ENCODE measurements at regions of chr19 and their contacts with region 1.

Region 1: DNA sequence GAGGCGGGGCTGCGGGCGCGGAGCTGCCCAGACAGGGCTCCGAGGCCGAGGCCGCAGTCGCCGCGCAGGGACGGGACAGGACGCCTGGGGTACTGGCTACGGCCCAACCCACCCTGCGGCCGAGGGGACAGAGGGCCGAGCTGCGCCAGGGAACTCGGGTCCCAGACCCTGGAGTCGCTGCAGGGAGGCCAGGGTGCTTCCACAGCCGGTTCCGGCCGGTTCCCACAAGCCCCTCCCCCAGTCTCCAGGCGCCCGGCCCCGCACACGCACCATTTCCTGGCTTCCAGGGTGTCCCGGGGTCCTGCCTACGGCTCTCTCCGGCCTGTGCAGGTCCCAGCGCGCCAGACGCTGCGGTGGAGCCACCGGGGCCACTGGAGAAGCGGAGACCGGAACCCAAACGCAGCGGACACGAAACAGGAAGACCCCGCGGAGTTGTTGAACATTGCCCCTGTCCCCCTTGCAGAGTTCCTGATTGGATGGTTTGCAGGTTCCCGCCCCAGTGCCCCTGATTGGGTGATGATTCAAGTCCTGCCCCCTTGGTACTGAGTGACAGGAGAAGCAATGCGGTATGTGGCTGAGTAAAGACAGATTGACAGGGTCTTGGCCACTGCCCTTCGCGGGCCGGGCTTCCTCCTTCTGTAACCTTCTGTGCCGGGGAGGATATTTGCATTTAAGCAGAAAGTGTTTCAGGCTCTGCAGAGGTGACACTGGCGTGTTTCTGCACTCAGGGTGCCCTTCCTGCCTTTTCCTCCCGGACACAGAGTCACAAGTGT is at the start of gene ZNF564:
- DNase-seq: peak; percentile 93 to 98 (median 97)
- ATAC-seq: peak; percentile 98
- H3K4me3 ChIP-seq: peak within 1 kb of the TSS; percentile 54 to 98 (median 82)
- H3K27ac ChIP-seq: peak within 1 kb of the TSS; percentile 91 to 100 (median 97)
- H3K4me1 ChIP-seq: peaks cover 0 to 52% (median 29%) of the 10 kb centered on the region in 12 donors
- H3K27me3 ChIP-seq: peaks cover 0 to 5% (median 0%) of the 10 kb centered on the region in 9 donors
- CTCF ChIP-seq: no peak
- POLR2A ChIP-seq: peak in 1 of 2 donors; percentile 91
- total RNA-seq, gene ZNF564: 6.1 to 10.4 (median 8.0) TPM

Region 2: GRCh38 chr19:12440541-12441316 is 110.5 kb before region 1 on chr19 and contains the start of gene ZNF443:
- intact Hi-C with region 1: loop called in 1 of 10 experiments (anchors 1 kb)
- DNase-seq: peak; percentile 98 to 99 (median 99)
- ATAC-seq: peak; percentile 100
- H3K4me3 ChIP-seq: peak within 1 kb of the TSS; percentile 58 to 87 (median 76)
- H3K27ac ChIP-seq: peak within 1 kb of the TSS; percentile 40 to 87 (median 76)
- H3K4me1 ChIP-seq: peaks cover 0 to 12% (median 0%) of the 10 kb centered on the region in 12 donors
- H3K27me3 ChIP-seq: no peaks in the 10 kb centered on the region
- CTCF ChIP-seq: peak in 2 of 12 donors; percentile 12 to 21
- POLR2A ChIP-seq: peak in 1 of 2 donors; percentile 59
- total RNA-seq, gene ZNF443: 1.5 to 3.6 (median 2.1) TPM

Region 3: DNA sequence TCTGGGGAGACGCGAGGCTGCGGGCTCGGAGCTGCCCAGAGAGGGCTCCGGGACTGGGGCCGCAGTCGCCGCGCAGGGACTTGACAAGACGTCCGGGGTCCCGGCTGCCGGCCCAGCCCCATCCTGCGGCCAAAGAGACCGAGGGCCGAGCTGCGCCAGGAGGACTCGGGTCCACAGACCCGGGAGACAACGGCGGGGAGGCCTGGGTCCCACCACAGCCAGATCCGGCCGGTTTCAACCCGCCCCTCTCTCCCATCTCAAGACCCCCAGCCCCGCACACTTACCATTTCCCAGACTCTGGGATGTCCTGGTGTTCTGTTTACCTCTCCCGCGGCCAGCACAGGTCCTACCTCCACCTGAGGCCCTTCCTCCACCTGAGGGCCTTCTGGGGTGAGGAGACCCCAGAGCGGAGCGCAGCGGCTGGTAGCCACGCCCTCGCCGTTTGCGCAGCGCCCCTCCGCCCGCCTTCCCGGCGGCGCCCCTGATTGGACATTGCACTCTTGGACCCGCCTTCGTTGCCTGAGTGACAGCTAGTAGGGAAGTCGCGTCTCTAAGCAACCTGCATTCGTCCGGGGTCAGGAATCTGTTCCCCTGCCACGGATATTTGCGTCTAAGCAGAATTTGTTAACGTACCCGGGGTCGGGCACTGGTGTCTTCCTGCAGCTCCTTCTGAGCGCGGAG is 66.7 kb before region 1 on chr19 and contains the start of gene ZNF709:
- intact Hi-C with region 1: loop called in 1 of 10 experiments (anchors 1 kb)
- DNase-seq: peak; percentile 91 to 95 (median 93)
- ATAC-seq: peak; percentile 98 to 100 (median 100)
- H3K4me3 ChIP-seq: peak within 1 kb of the TSS; percentile 80 to 99 (median 94)
- H3K27ac ChIP-seq: peak within 1 kb of the TSS; percentile 39 to 87 (median 76)
- H3K4me1 ChIP-seq: peaks cover 0 to 27% (median 13%) of the 10 kb centered on the region in 12 donors
- H3K27me3 ChIP-seq: no peaks in the 10 kb centered on the region
- CTCF ChIP-seq: no peak
- POLR2A ChIP-seq: peak in 1 of 2 donors; percentile 51
- total RNA-seq, gene ZNF709: 0.89 to 2.9 (median 1.7) TPM

Region 4: DNA sequence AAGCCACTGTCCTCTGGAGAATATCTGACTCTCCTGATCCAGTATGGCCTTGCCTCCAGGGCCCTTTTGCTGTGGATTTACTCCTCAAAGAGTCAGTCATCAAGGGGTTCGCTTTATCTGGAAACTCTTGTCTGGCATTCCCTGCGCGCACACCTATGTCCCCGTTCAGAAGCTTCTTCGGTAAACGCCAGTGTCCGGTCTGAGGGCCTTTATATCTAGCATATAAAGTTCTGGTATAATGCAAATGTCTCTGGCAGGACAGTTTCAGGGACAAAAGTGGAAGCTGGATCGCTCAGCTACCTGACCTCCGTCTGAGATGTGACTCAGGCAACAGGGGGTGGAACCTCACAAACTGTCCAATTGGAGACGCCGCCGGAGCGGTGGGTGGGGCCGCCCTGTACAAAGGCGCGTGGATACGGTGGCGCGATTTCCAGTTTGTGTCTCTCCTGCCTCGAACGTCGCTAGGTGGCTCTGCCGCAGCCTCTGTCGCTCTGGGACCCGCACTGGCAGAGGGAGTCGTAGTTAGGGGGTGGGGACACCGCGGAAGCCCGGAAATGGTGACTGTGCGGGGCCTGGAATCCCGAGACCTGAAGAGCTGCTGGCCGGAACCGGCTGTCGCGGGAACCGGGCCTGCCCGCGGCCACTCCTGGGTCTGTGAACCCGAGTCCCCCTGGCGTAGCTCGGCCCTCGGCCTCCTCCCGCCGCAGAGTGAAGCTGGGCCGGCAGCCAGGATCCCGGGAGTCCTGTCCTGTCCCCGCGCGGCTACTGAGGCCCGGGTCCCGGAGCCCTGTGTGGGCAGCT is 56.0 kb before region 1 on chr19:
- intact Hi-C with region 1: loop called in 7 of 10 experiments (anchors 1 to 10 kb)
- DNase-seq: peak; percentile 93 to 97 (median 96)
- ATAC-seq: peak; percentile 100
- H3K4me3 ChIP-seq: peak overlapping the region; percentile 8 to 84 (median 66)
- H3K27ac ChIP-seq: peak overlapping the region; percentile 49 to 93 (median 84)
- H3K4me1 ChIP-seq: peaks cover 0 to 13% (median 7%) of the 10 kb centered on the region in 12 donors
- H3K27me3 ChIP-seq: no peaks in the 10 kb centered on the region
- CTCF ChIP-seq: peak in 11 of 12 donors; percentile 18 to 75 (median 48)
- POLR2A ChIP-seq: peak in 1 of 2 donors; percentile 83

Region 5: GRCh38 chr19:12502149-12502548 is 49.1 kb before region 1 on chr19:
- intact Hi-C with region 1: loop called in 4 of 10 experiments (anchors 5 to 10 kb)
- DNase-seq: no peak
- ATAC-seq: peak in 1 of 4 donors; percentile 30
- H3K4me3 ChIP-seq: no peak overlapping the region
- H3K27ac ChIP-seq: no peak overlapping the region
- H3K4me1 ChIP-seq: no peaks in the 10 kb centered on the region
- H3K27me3 ChIP-seq: no peaks in the 10 kb centered on the region
- CTCF ChIP-seq: no peak
- POLR2A ChIP-seq: no peak

Region 6: DNA sequence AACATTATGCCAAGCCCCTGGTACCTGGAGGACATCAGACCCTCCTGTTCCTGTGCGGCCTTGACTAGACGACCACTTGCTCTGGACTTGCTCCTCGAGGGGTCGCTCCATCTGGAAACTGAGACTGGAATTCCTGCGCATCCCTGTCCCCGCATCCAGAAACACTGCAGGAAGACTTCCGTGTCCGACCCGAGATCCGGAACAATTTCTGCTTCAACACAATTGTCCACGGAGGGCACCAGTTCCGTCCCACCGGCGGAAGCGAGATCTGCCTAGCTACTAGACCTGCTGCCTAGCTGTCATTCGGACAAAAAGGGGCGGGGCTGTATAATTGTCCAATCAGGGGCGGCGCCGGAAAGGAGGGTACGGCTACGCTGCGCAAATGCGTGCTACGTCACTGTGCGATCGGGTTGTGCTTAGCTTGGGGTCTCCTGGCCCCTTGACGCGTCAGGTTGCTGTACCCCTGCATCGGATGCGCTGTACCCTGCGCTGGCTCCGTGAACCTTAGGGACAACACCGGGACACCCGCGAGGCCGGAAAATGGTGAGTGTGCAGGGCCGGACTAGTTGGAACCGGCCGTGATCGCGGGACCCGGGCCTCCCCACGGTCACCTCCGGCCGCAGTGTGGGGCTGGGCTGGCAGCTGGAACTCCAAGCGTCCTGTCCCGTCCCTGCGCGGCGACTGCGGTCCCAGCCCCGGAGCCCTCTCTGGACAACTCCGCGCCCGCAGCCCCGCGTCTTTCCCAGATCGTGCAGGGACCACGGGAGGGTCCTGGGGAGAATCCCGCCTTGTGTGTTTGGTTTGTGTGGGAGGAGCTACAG is 59.5 kb after region 1 on chr19 and contains the starts of genes ZNF490 and ZNF791:
- intact Hi-C with region 1: loop called in 1 of 10 experiments (anchors 1 kb)
- DNase-seq: peak; percentile 97 to 99 (median 99)
- ATAC-seq: peak; percentile 99
- H3K4me3 ChIP-seq: peak within 1 kb of the TSS; percentile 77 to 99 (median 90)
- H3K27ac ChIP-seq: peak within 1 kb of the TSS; percentile 82 to 99 (median 98)
- H3K4me1 ChIP-seq: peaks cover 0 to 53% (median 29%) of the 10 kb centered on the region in 12 donors
- H3K27me3 ChIP-seq: no peaks in the 10 kb centered on the region
- CTCF ChIP-seq: peak in 2 of 12 donors; percentile 17 to 22
- POLR2A ChIP-seq: peak; percentile 81 to 83
- total RNA-seq, gene ZNF490: 3.7 to 8.9 (median 5.3) TPM
- total RNA-seq, gene ZNF791: 9.4 to 22.6 (median 14.3) TPM

Region 7: GRCh38 chr19:12639901-12640613 is 88.8 kb after region 1 on chr19:
- intact Hi-C with region 1: no loop called
- DNase-seq: peak; percentile 78 to 89 (median 88)
- ATAC-seq: peak; percentile 65 to 93 (median 90)
- H3K4me3 ChIP-seq: peak overlapping the region in 9 of 12 donors; percentile 31 to 43 (median 33)
- H3K27ac ChIP-seq: no peak overlapping the region
- H3K4me1 ChIP-seq: peaks cover 0 to 12% (median 7%) of the 10 kb centered on the region in 12 donors
- H3K27me3 ChIP-seq: no peaks in the 10 kb centered on the region
- CTCF ChIP-seq: peak; percentile 64 to 87 (median 76)
- POLR2A ChIP-seq: no peak

Measured in heart left ventricle (tissue), 16 donors.